Calu3 (cell line): ENCODE measurements at regions of chr1 and their contacts with region 1.

Region 1: GRCh38 chr1:53182111-53182593 is 14.5 kb upstream of the CPT2 start:
- DNase-seq: peak; percentile 84
- H3K4me3 Mint-ChIP-seq: no peak overlapping the region
- H3K27ac Mint-ChIP-seq: no peak overlapping the region
- H3K4me1 Mint-ChIP-seq: peaks cover 3% of the 10 kb centered on the region
- H3K27me3 Mint-ChIP-seq: peaks cover 11% of the 10 kb centered on the region
- CTCF ChIP-seq: peak; percentile 80

Region 2: DNA sequence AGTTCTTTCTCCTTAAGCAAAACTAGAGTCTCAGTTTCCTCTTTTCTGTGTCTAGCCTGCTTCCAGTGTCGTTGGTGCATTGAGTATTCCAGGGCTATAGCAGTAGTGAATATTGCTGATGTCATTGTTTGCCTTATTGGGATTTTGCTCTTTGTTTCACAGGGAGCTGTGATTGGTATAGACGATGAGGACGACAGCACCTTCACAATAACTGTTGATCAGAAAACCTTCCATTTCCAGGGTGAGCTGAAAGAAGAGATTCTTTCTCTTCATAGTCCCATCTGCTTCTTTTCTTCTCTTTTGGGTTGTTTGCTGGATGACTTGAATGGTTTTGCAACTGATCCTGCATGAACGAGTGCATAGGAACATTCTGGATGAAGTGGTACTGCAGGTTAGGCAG is 1512.9 kb before region 1 on chr1:
- CTCF ChIA-PET with region 1: interaction called, 11 read pairs
- intact Hi-C with region 1: no loop called
- DNase-seq: no peak
- H3K4me3 Mint-ChIP-seq: no peak overlapping the region
- H3K27ac Mint-ChIP-seq: no peak overlapping the region
- H3K4me1 Mint-ChIP-seq: peaks cover 25% of the 10 kb centered on the region
- H3K27me3 Mint-ChIP-seq: no peaks in the 10 kb centered on the region
- CTCF ChIP-seq: no peak

Region 3: GRCh38 chr1:52702886-52703787 is 479.0 kb before region 1 on chr1:
- CTCF ChIA-PET with region 1: no interaction called
- intact Hi-C with region 1: loop called (anchors 2 kb)
- DNase-seq: peak; percentile 87
- H3K4me3 Mint-ChIP-seq: peak overlapping the region; percentile 98
- H3K27ac Mint-ChIP-seq: peak overlapping the region; percentile 96
- H3K4me1 Mint-ChIP-seq: peaks cover 38% of the 10 kb centered on the region
- H3K27me3 Mint-ChIP-seq: no peaks in the 10 kb centered on the region
- CTCF ChIP-seq: no peak

Region 4: DNA sequence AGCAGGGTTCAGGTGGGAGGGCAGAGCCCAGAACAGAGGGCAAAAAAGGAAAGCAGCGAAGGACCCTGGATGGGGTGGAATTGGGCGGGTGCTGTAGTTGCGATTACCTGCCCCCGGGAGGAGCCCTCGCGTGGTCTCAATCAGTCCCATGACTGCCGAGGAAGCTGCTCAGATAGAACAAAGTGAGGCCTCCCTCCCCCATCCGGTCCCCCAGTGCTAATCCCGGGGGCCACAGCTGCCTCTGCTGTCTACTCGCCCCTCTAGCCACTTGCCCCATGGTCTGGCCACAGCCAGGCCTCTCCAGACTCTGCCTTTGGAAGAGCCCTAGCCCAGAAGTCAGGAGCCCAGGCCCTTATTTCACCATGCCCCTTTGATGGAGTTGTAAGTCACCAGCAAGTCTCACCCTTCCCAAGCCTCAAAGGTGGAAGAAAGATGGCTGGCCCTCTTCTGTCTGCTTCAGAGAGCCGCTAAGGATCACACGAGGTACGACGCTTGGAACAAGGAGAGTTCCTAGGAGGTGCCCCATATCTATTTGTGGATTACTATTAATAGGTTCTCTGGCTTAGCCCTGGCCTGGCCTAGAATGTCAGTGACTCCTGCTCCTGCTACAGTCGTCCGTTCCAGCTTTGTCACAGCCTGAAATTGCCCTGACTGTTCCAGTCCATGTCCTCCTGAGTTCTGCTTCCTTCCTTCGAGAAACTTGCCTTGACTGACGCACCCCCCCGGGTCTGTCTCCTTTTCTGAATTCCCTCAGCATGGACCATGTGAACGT is 277.0 kb before region 1 on chr1:
- CTCF ChIA-PET with region 1: interaction called, 3 read pairs
- intact Hi-C with region 1: loop called (anchors 2 kb)
- DNase-seq: peak; percentile 52
- H3K4me3 Mint-ChIP-seq: no peak overlapping the region
- H3K27ac Mint-ChIP-seq: no peak overlapping the region
- H3K4me1 Mint-ChIP-seq: no peaks in the 10 kb centered on the region
- H3K27me3 Mint-ChIP-seq: no peaks in the 10 kb centered on the region
- CTCF ChIP-seq: peak; percentile 48

Region 5: DNA sequence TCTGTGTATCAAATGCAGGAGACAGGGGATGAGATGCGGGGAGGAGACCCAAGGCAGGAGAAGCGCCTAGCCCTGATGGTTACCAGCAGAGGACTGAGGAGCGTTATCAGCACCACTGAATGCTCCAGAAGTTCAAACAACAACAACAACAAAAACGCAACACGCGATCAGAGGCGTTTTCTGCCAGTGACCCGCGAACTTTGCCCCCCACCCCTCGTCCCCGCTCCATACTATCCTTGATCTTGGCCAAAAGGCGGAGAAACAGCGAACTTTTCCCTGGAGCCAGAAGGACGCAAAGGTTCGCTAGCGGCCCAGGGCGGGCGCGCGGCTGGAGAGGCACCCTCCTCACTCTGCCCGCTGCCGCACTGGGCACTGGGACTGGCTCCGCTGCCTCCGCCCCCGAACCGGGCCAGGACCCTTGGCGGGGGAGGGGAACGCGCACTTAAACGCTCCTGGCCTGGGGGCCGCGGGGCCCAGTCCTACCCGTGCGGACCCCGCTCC is 261.3 kb before region 1 on chr1:
- CTCF ChIA-PET with region 1: no interaction called
- intact Hi-C with region 1: loop called (anchors 5 kb)
- DNase-seq: peak; percentile 22
- H3K4me3 Mint-ChIP-seq: peak overlapping the region; percentile 94
- H3K27ac Mint-ChIP-seq: no peak overlapping the region
- H3K4me1 Mint-ChIP-seq: peaks cover 24% of the 10 kb centered on the region
- H3K27me3 Mint-ChIP-seq: no peaks in the 10 kb centered on the region
- CTCF ChIP-seq: no peak

Region 6: GRCh38 chr1:53014791-53015507 is 167.2 kb before region 1 on chr1:
- CTCF ChIA-PET with region 1: interaction called, 4 read pairs
- intact Hi-C with region 1: loop called (anchors 10 kb)
- DNase-seq: peak; percentile 82
- H3K4me3 Mint-ChIP-seq: peak overlapping the region; percentile 79
- H3K27ac Mint-ChIP-seq: peak overlapping the region; percentile 39
- H3K4me1 Mint-ChIP-seq: peaks cover 19% of the 10 kb centered on the region
- H3K27me3 Mint-ChIP-seq: no peaks in the 10 kb centered on the region
- CTCF ChIP-seq: no peak

Region 7: GRCh38 chr1:53220171-53220961 is 38.2 kb after region 1 on chr1 and contains the start of gene CZIB:
- CTCF ChIA-PET with region 1: no interaction called
- intact Hi-C with region 1: loop called (anchors 1 kb)
- DNase-seq: peak; percentile 96
- H3K4me3 Mint-ChIP-seq: peak within 1 kb of the TSS; percentile 89
- H3K27ac Mint-ChIP-seq: peak within 1 kb of the TSS; percentile 86
- H3K4me1 Mint-ChIP-seq: peaks cover 17% of the 10 kb centered on the region
- H3K27me3 Mint-ChIP-seq: no peaks in the 10 kb centered on the region
- CTCF ChIP-seq: no peak
- total RNA-seq, gene CZIB: 31.3 and 34.1 TPM in 2 replicates